ENCODE measurements at regions of chr7 and their contacts with region 1.

Region 1: DNA sequence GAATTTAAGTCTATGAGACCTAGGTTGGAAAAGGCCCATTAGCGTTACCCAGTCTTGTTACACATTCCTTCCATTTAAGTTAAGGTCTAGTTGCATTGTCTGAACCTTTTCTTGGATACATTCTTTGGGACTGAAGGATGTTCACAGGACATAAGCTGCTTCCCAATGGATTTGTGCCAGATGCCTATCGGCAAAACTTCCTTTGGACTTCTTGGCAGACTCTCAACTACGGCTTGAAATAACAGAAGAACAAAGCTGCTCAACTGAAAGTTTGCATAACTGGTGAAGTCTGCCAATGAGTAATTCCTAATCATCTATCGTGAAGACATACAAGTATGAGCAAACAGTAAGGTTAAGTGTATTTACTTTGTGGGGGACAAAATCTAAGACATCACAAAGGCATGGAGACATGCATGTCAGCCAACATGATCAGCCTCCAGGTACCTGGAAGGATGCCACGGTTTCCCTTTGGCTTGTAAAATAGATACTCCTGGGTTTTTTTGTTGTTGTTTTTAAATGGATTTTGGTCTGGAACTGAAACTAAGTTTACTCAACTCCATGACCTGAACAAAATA is 35.4 kb downstream of the MALSU1 start:
- DNase-seq: peak; percentile 98
- ATAC-seq: peak; percentile 88 to 89
- H3K4me3 ChIP-seq: peak overlapping the region; percentile 26; the same call in 2 of the 3 replicates
- H3K27ac ChIP-seq: peak overlapping the region; percentile 75 to 91
- H3K4me1 ChIP-seq: peaks cover 47% of the 10 kb centered on the region
- CTCF ChIP-seq: no peak
- EP300 ChIP-seq: peak; percentile 96 to 98
- POLR2A ChIP-seq: no peak
- RAD21 ChIP-seq: peak; percentile 11 to 53; a peak in 4 of 5 replicates

Region 2: DNA sequence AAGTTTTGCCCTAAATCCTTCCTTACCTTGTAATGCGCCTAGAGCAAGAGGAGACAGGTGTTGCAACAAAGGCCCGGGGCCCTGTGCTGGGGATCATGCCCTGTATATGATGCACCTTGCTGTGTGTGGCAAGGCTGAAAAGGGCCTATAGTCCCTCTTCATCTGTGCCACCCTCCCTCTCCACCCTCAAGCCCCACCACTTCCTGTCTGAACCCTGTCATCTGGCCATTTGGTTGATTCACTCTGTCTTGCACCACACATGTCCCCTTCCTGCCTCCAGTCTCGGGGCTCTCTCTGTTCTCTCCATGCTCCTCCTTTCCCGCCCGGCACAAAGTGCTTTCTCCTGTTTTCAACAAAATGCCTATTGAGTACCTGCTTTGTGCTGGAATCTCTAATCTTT is 47.0 kb before region 1 on chr7:
- CTCF ChIA-PET with region 1: no interaction called
- POLR2A ChIA-PET with region 1: no interaction called
- DNase-seq: no peak
- ATAC-seq: peak in 1 of 2 experiments; percentile 25; a peak in 1 of 6 replicates
- H3K4me3 ChIP-seq: no peak overlapping the region
- H3K27ac ChIP-seq: no peak overlapping the region
- H3K4me1 ChIP-seq: peaks cover 4% of the 10 kb centered on the region; the same call in 1 of the 3 replicates
- CTCF ChIP-seq: no peak
- EP300 ChIP-seq: no peak
- POLR2A ChIP-seq: no peak
- RAD21 ChIP-seq: no peak

Region 3: DNA sequence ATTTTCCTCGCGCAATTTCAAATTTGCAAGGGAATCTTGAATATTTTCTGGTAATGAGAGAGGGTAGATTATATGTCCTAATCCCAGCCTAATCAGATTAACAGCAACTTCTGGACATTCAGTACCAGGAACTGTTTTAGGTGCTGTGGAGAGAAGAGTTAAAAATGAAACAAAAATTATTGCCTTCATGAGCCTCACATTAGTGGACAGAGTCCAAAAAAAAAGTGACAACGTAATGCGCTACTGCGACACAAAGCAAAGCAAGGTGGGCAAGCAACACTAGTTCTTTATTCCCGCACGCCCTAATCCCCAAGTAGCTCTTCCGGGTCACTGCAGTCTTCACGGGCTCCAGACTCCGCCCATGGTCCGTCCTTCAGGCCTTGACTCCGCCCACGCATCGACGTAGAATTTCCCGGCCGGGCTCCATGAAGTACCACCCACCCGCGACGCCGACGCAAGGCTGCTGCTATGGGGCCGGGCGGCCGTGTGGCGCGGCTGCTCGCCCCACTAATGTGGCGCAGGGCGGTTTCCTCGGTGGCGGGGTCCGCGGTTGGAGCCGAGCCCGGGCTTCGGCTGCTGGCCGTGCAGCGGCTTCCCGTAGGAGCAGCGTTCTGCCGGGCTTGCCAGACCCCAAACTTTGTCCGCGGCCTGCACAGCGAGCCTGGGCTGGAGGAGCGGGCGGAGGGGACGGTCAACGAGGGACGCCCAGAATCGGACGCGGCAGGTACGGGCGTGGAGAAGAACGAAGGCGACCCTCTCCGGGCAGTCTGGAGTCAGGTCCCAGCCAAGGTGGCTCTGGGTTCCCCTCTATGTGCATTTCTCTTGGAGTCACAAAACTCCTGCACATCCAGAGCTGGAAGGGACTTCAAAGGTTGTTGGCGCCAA is 35.4 kb before region 1 on chr7 and contains the start of gene MALSU1:
- CTCF ChIA-PET with region 1: interaction called, 6 read pairs
- POLR2A ChIA-PET with region 1: interaction called, 18 read pairs
- DNase-seq: peak; percentile 92 to 97
- ATAC-seq: peak; percentile 95 to 96
- H3K4me3 ChIP-seq: peak within 1 kb of the TSS; percentile 79
- H3K27ac ChIP-seq: peak within 1 kb of the TSS; percentile 87 to 96
- H3K4me1 ChIP-seq: peaks cover 36% of the 10 kb centered on the region
- CTCF ChIP-seq: no peak
- EP300 ChIP-seq: no peak
- POLR2A ChIP-seq: peak; percentile 96
- RAD21 ChIP-seq: no peak
- polyA plus RNA-seq, gene MALSU1: 93.6 and 122 TPM in 2 replicates

Region 4: GRCh38 chr7:23357190-23358093 is 22.9 kb after region 1 on chr7:
- CTCF ChIA-PET with region 1: interaction called, 13 read pairs
- POLR2A ChIA-PET with region 1: interaction called, 3 read pairs
- DNase-seq: peak; percentile 86 to 87
- ATAC-seq: peak; percentile 91 to 96
- H3K4me3 ChIP-seq: no peak overlapping the region
- H3K27ac ChIP-seq: peak overlapping the region; percentile 62
- H3K4me1 ChIP-seq: peaks cover 37% of the 10 kb centered on the region
- CTCF ChIP-seq: peak; percentile 78
- EP300 ChIP-seq: peak; percentile 57 to 67; a peak in 3 of 5 replicates
- POLR2A ChIP-seq: no peak
- RAD21 ChIP-seq: peak; percentile 62 to 85

Region 5: GRCh38 chr7:23597094-23598091 is 262.8 kb after region 1 on chr7 and contains the start of gene CCDC126:
- CTCF ChIA-PET with region 1: no interaction called
- POLR2A ChIA-PET with region 1: no interaction called
- DNase-seq: peak; percentile 90 to 92
- ATAC-seq: peak; percentile 97 to 98
- H3K4me3 ChIP-seq: peak within 1 kb of the TSS; percentile 74
- H3K27ac ChIP-seq: peak within 1 kb of the TSS; percentile 78 to 90
- H3K4me1 ChIP-seq: peaks cover 7% of the 10 kb centered on the region
- CTCF ChIP-seq: no peak
- EP300 ChIP-seq: no peak
- POLR2A ChIP-seq: peak; percentile 45
- RAD21 ChIP-seq: no peak
- polyA plus RNA-seq, gene CCDC126: 6.5 and 10.1 TPM in 2 replicates

Region 6: DNA sequence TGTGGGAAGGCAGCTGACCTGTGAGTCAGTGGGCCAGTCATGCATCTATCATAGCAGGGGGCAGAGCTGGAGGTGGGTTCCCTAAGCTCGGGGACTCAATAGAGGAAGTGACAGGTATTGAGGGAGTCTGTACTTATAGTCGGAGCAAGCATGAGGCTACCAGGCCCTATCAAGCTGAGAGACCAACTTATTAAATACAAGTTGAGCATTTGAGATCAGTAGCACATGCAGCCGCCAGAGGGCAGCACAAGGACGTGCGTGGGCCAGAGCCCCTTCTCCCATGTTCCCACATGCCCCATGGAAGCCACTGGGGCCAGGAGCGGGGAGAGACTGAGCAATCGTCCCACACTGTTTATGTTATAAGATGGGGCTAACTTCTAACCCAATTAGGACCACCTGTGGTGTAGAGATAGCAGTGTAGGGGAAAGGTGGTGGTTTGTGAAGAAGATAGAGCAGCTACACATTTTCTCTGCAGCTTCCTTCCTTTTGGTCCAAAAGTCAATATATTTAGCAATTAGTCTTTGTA is 362.4 kb after region 1 on chr7:
- CTCF ChIA-PET with region 1: no interaction called
- POLR2A ChIA-PET with region 1: no interaction called
- DNase-seq: peak; percentile 55 to 85
- ATAC-seq: peak; percentile 95 to 99
- H3K4me3 ChIP-seq: no peak overlapping the region
- H3K27ac ChIP-seq: no peak overlapping the region
- H3K4me1 ChIP-seq: no peaks in the 10 kb centered on the region
- CTCF ChIP-seq: peak; percentile 71
- EP300 ChIP-seq: no peak
- POLR2A ChIP-seq: no peak
- RAD21 ChIP-seq: peak; percentile 58 to 75

Region 7: GRCh38 chr7:23981320-23981719 is 646.8 kb after region 1 on chr7:
- CTCF ChIA-PET with region 1: no interaction called
- POLR2A ChIA-PET with region 1: no interaction called
- DNase-seq: no peak
- ATAC-seq: no peak
- H3K4me3 ChIP-seq: no peak overlapping the region
- H3K27ac ChIP-seq: no peak overlapping the region
- H3K4me1 ChIP-seq: no peaks in the 10 kb centered on the region
- CTCF ChIP-seq: no peak
- EP300 ChIP-seq: no peak
- POLR2A ChIP-seq: no peak
- RAD21 ChIP-seq: no peak